Panc1 (cell line): ENCODE measurements at regions of chr15 and their contacts with region 1.

Region 1: DNA sequence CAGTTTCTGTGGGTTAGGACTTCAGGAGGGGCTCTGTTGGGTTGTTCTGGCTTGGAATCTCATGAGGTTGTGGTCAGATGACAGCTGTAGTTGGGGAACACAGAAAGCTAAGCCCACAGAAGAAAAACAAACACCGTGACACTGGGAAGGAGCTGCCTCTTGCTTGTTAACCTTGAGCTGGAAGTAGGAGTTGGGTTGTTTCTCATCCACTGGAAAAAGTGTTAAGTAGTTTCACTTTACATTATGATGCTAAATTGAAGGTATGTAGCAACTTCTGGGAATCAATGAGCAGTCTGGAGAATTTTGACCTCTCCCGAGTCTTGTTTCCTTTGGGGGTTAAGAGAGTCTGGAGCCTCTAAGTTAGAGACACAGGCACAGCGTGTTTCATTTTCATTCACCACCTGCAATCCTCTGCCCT is 20.4 kb downstream of the HACD3 start:
- DNase-seq: no peak
- ATAC-seq: no peak
- H3K4me3 ChIP-seq: no peak overlapping the region
- H3K27ac ChIP-seq: no peak overlapping the region
- H3K4me1 ChIP-seq: peaks cover 10% of the 10 kb centered on the region
- H3K27me3 ChIP-seq: no peaks in the 10 kb centered on the region
- CTCF ChIP-seq: no peak

Region 2: GRCh38 chr15:65530314-65531122 is 20.2 kb before region 1 on chr15 and contains the start of gene HACD3:
- CTCF ChIA-PET with region 1: interaction called, 17 read pairs
- POLR2A ChIA-PET with region 1: no interaction called
- in situ Hi-C with region 1: no loop called
- intact Hi-C with region 1: no loop called
- DNase-seq: no peak
- ATAC-seq: peak; percentile 95
- H3K4me3 ChIP-seq: peak within 1 kb of the TSS; percentile 69 to 78
- H3K27ac ChIP-seq: peak within 1 kb of the TSS; percentile 88
- H3K4me1 ChIP-seq: peaks cover 29% of the 10 kb centered on the region
- H3K27me3 ChIP-seq: no peaks in the 10 kb centered on the region
- CTCF ChIP-seq: no peak
- total RNA-seq, gene HACD3: 83.2 TPM